MCF 10A (cell line): ENCODE measurements at regions of chr16 and their contacts with region 1.

Region 1: GRCh38 chr16:23803591-23804123 is 32.1 kb upstream of the PRKCB start:
- DNase-seq: peak; percentile 61
- H3K4me3 Mint-ChIP-seq: no peak overlapping the region
- H3K27ac Mint-ChIP-seq: peak overlapping the region; percentile 5
- H3K4me1 Mint-ChIP-seq: peaks cover 7% of the 10 kb centered on the region
- H3K27me3 Mint-ChIP-seq: no peaks in the 10 kb centered on the region
- CTCF ChIP-seq: peak; percentile 46

Region 2: GRCh38 chr16:23629516-23629915 is 174.1 kb before region 1 on chr16:
- CTCF ChIA-PET with region 1: no interaction called
- POLR2A ChIA-PET with region 1: no interaction called
- intact Hi-C with region 1: no loop called
- DNase-seq: no peak
- H3K4me3 Mint-ChIP-seq: no peak overlapping the region
- H3K27ac Mint-ChIP-seq: peak overlapping the region; percentile 52
- H3K4me1 Mint-ChIP-seq: peaks cover 7% of the 10 kb centered on the region
- H3K27me3 Mint-ChIP-seq: no peaks in the 10 kb centered on the region
- CTCF ChIP-seq: no peak

Region 3: GRCh38 chr16:23729503-23730424 is 73.9 kb before region 1 on chr16:
- CTCF ChIA-PET with region 1: interaction called, 9 read pairs
- POLR2A ChIA-PET with region 1: no interaction called
- intact Hi-C with region 1: loop called (anchors 2 kb)
- DNase-seq: peak; percentile 78
- H3K4me3 Mint-ChIP-seq: no peak overlapping the region
- H3K27ac Mint-ChIP-seq: no peak overlapping the region
- H3K4me1 Mint-ChIP-seq: peaks cover 14% of the 10 kb centered on the region
- H3K27me3 Mint-ChIP-seq: no peaks in the 10 kb centered on the region
- CTCF ChIP-seq: no peak

Region 4: GRCh38 chr16:23784811-23785447 is 18.7 kb before region 1 on chr16:
- CTCF ChIA-PET with region 1: interaction called, 16 read pairs
- POLR2A ChIA-PET with region 1: interaction called, 3 read pairs
- intact Hi-C with region 1: no loop called
- DNase-seq: peak; percentile 47
- H3K4me3 Mint-ChIP-seq: no peak overlapping the region
- H3K27ac Mint-ChIP-seq: no peak overlapping the region
- H3K4me1 Mint-ChIP-seq: peaks cover 13% of the 10 kb centered on the region
- H3K27me3 Mint-ChIP-seq: peaks cover 17% of the 10 kb centered on the region
- CTCF ChIP-seq: no peak

Region 5: DNA sequence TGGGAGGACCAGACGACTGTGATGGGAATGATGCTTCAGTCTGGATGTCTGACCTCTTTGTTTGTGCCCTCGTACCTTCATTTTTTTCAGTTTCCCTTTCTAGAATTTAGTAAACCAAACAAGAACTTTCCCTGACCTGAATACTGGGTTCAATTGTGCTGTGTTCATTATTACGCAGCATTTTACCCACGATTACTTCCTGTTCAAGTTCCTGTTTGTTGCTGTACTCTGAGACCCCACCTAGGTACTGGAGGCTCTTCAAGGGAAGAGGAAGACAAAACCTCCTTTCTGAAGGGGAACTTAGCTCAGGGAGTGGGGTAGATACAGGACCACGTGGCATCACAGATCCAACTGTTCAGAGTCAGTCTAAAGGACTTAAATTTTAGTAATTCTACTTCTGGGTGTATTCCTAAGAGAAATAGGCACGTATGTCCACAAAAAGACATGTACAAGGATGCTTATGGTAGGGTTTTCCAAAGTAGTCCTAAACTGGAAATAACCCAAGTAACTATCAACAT is 22.9 kb after region 1 on chr16:
- CTCF ChIA-PET with region 1: interaction called, 11 read pairs
- POLR2A ChIA-PET with region 1: no interaction called
- intact Hi-C with region 1: no loop called
- DNase-seq: no peak
- H3K4me3 Mint-ChIP-seq: no peak overlapping the region
- H3K27ac Mint-ChIP-seq: no peak overlapping the region
- H3K4me1 Mint-ChIP-seq: no peaks in the 10 kb centered on the region
- H3K27me3 Mint-ChIP-seq: peaks cover 19% of the 10 kb centered on the region
- CTCF ChIP-seq: no peak

Region 6: GRCh38 chr16:23905027-23905426 is 101.4 kb after region 1 on chr16:
- CTCF ChIA-PET with region 1: interaction called, 22 read pairs
- POLR2A ChIA-PET with region 1: interaction called, 3 read pairs
- intact Hi-C with region 1: no loop called
- DNase-seq: peak; percentile 68
- H3K4me3 Mint-ChIP-seq: no peak overlapping the region
- H3K27ac Mint-ChIP-seq: no peak overlapping the region
- H3K4me1 Mint-ChIP-seq: peaks cover 19% of the 10 kb centered on the region
- H3K27me3 Mint-ChIP-seq: no peaks in the 10 kb centered on the region
- CTCF ChIP-seq: no peak

Region 7: GRCh38 chr16:24010440-24011089 is 206.9 kb after region 1 on chr16:
- CTCF ChIA-PET with region 1: interaction called, 248 read pairs
- POLR2A ChIA-PET with region 1: interaction called, 3 read pairs
- intact Hi-C with region 1: loop called (anchors 1 kb)
- DNase-seq: peak; percentile 83
- H3K4me3 Mint-ChIP-seq: no peak overlapping the region
- H3K27ac Mint-ChIP-seq: no peak overlapping the region
- H3K4me1 Mint-ChIP-seq: no peaks in the 10 kb centered on the region
- H3K27me3 Mint-ChIP-seq: peaks cover 24% of the 10 kb centered on the region
- CTCF ChIP-seq: peak; percentile 77

Region 8: DNA sequence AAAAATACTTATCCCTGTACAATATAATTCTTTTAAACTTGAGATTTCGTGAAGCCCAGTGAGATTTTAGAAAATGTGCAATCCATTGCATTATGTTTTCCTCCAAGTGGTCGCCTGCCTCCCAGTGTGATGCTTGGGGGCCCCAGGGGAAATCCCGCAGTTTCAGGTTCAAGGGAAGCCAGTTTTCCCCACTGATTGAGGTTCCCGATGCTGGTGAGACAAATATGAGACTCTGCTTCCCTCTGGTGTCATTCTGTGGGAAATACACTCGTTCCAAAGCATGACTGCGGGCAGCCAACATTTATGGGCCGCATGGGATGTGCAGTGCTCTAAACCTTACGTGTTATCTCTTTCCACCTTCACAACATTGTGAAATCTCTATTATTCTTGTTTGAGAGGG is 233.0 kb after region 1 on chr16:
- CTCF ChIA-PET with region 1: interaction called, 94 read pairs
- POLR2A ChIA-PET with region 1: no interaction called
- intact Hi-C with region 1: loop called (anchors 1 kb)
- DNase-seq: peak; percentile 55
- H3K4me3 Mint-ChIP-seq: no peak overlapping the region
- H3K27ac Mint-ChIP-seq: no peak overlapping the region
- H3K4me1 Mint-ChIP-seq: no peaks in the 10 kb centered on the region
- H3K27me3 Mint-ChIP-seq: peaks cover 38% of the 10 kb centered on the region
- CTCF ChIP-seq: peak; percentile 81